GM12878 (cell line): ENCODE measurements at regions of chr14 and their contacts with region 1.

Region 1: DNA sequence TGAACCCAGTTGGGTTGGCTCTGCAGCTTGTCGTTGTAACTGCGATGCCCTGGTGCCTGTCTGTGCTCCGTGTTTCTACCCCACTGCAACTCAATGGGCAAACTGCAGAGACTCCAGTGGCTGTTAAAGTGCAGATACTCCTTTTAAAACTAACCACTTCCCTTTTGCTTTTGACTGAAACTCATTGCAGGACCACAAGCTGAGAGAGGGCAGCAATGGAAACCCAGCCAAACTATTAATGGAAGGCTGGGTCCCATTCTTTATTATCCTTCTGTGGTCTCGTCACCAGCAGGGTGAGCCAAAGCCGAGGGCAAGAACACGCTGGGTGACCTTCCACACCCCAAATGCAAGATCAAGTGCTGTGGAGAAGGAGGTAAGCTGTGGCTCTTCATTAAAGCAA is 910.4 kb downstream of the VRK1 start:
- DNase-seq: peak; percentile 40
- ATAC-seq: peak; percentile 77
- H3K4me3 ChIP-seq: no peak overlapping the region
- H3K27ac ChIP-seq: no peak overlapping the region
- H3K4me1 ChIP-seq: peaks cover 7% of the 10 kb centered on the region
- H3K27me3 ChIP-seq: no peaks in the 10 kb centered on the region
- CTCF ChIP-seq: peak; percentile 2 to 17 (median 9); a peak in 1 of 6 replicates
- EP300 ChIP-seq: 0 out of 4 replicates have a peak, but pooled peaks of 1 of the 2 experiments have one; percentile 45
- POLR2A ChIP-seq: no peak
- RAD21 ChIP-seq: peak; percentile 55

Region 2: DNA sequence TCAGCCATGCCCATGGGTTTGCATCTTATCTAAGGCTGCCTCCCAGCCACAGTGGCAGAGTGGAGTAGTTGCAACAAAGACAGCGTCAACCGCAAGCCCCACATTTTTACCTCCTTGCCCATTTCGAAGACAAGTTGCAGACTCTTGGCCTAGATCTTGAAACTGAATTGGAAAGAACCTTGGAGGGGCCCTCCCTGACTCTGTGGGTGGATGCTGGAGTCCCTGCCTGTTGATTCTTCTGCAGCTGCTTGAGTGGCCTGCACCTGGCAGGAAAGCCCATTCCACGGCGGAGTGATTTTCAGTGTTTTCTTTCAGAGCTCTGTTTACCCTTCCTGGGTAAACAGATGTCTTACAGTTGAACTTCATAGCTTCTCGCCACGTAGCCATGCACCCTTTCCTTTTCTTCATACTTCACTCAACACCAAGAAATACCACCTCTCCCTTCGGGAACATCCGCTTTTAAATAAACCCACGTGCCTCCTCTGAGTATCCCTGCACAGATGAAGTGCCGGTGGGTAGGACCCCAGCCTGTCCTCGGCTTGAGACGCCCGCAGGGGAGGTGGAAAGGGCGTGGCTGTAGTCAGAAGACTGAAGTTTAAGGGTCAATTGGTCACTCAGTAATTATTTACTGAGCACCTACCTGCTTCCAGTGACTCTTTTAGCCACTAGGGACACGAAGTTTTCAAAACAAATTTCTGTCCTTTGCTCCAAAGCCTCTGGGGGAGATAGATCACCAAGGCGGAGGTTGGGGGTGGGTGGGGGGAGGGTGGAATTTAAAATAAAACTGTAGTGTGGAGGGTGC is 601.2 kb before region 1 on chr14:
- CTCF ChIA-PET with region 1: no interaction called
- POLR2A ChIA-PET with region 1: no interaction called
- RAD21 ChIA-PET with region 1: no interaction called
- SMC1A ChIA-PET with region 1: no interaction called
- in situ Hi-C with region 1: no loop called
- intact Hi-C with region 1: no loop called
- DNase-seq: peak; percentile 12
- ATAC-seq: peak; percentile 65
- H3K4me3 ChIP-seq: no peak overlapping the region; the same call in 1 of the 2 replicates
- H3K27ac ChIP-seq: no peak overlapping the region
- H3K4me1 ChIP-seq: no peaks in the 10 kb centered on the region; the same call in 1 of the 2 replicates
- H3K27me3 ChIP-seq: no peaks in the 10 kb centered on the region
- CTCF ChIP-seq: peak in 1 of 3 experiments; percentile 6; a peak in 2 of 6 replicates
- EP300 ChIP-seq: no peak
- POLR2A ChIP-seq: no peak
- RAD21 ChIP-seq: no peak; the same call in 1 of the 2 replicates

Region 3: DNA sequence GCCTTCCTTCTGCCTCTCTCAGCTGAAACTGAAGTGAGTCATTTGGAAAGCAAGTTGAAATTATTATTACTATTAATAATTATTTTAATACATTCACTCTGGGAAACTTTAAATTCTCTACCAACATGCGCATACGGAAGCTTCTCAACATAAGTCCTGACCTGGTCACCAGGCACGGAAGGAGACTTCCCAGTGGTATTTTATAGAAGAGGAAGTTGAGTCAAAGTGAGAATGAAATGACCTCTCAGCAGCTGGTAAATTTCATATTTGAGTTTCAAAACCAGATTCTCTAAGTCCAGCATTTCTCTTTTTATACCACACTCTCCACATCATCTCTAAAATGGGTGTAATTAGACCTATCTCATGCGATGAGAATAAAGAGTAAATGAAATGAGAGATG is 163.0 kb before region 1 on chr14:
- CTCF ChIA-PET with region 1: no interaction called
- POLR2A ChIA-PET with region 1: no interaction called
- RAD21 ChIA-PET with region 1: no interaction called
- SMC1A ChIA-PET with region 1: no interaction called
- in situ Hi-C with region 1: no loop called
- intact Hi-C with region 1: loop called (anchors 10 kb)
- DNase-seq: peak; percentile 21
- ATAC-seq: peak; percentile 68
- H3K4me3 ChIP-seq: no peak overlapping the region
- H3K27ac ChIP-seq: peak overlapping the region; percentile 9; the same call in 1 of the 2 replicates
- H3K4me1 ChIP-seq: peaks cover 6% of the 10 kb centered on the region
- H3K27me3 ChIP-seq: no peaks in the 10 kb centered on the region
- CTCF ChIP-seq: no peak
- EP300 ChIP-seq: peak in 1 of 2 experiments; percentile 47; a peak in 1 of 4 replicates
- POLR2A ChIP-seq: no peak
- RAD21 ChIP-seq: no peak

Region 4: GRCh38 chr14:97634751-97635150 is 72.9 kb before region 1 on chr14:
- CTCF ChIA-PET with region 1: no interaction called
- POLR2A ChIA-PET with region 1: no interaction called
- RAD21 ChIA-PET with region 1: no interaction called
- SMC1A ChIA-PET with region 1: interaction called, 3 read pairs
- in situ Hi-C with region 1: no loop called
- intact Hi-C with region 1: loop called (anchors 5 kb)
- DNase-seq: no peak
- ATAC-seq: peak; percentile 41; the same call in 1 of the 3 replicates
- H3K4me3 ChIP-seq: no peak overlapping the region; the same call in 1 of the 2 replicates
- H3K27ac ChIP-seq: no peak overlapping the region
- H3K4me1 ChIP-seq: no peaks in the 10 kb centered on the region
- H3K27me3 ChIP-seq: no peaks in the 10 kb centered on the region
- CTCF ChIP-seq: no peak
- EP300 ChIP-seq: no peak
- POLR2A ChIP-seq: no peak
- RAD21 ChIP-seq: no peak

Region 5: GRCh38 chr14:97724265-97724731 is 16.7 kb after region 1 on chr14:
- CTCF ChIA-PET with region 1: interaction called, 11 read pairs
- POLR2A ChIA-PET with region 1: no interaction called
- RAD21 ChIA-PET with region 1: no interaction called
- SMC1A ChIA-PET with region 1: interaction called, 4 read pairs
- in situ Hi-C with region 1: no loop called
- intact Hi-C with region 1: no loop called
- DNase-seq: no peak
- ATAC-seq: peak; percentile 56
- H3K4me3 ChIP-seq: no peak overlapping the region
- H3K27ac ChIP-seq: no peak overlapping the region
- H3K4me1 ChIP-seq: no peaks in the 10 kb centered on the region
- H3K27me3 ChIP-seq: no peaks in the 10 kb centered on the region
- CTCF ChIP-seq: no peak
- EP300 ChIP-seq: no peak
- POLR2A ChIP-seq: no peak
- RAD21 ChIP-seq: no peak